Natural killer cell (primary cell): ENCODE measurements at regions of chr1 and their contacts with region 1.

Region 1: GRCh38 chr1:228131766-228132165 is 8.3 kb upstream of the GUK1 start:
- DNase-seq: no peak
- ATAC-seq: no peak
- H3K4me3 ChIP-seq: no peak overlapping the region
- H3K4me3 Mint-ChIP-seq: no peak overlapping the region
- H3K27ac ChIP-seq: no peak overlapping the region
- H3K27ac Mint-ChIP-seq: no peak overlapping the region
- H3K4me1 ChIP-seq: peaks cover 7% of the 10 kb centered on the region
- H3K4me1 Mint-ChIP-seq: peaks cover 0 to 5% of the 10 kb centered on the region in 2 donors
- H3K27me3 ChIP-seq: no peaks in the 10 kb centered on the region
- H3K27me3 Mint-ChIP-seq: peaks cover 0 to 9% of the 10 kb centered on the region in 2 donors
- CTCF ChIP-seq: no peak

Region 2: DNA sequence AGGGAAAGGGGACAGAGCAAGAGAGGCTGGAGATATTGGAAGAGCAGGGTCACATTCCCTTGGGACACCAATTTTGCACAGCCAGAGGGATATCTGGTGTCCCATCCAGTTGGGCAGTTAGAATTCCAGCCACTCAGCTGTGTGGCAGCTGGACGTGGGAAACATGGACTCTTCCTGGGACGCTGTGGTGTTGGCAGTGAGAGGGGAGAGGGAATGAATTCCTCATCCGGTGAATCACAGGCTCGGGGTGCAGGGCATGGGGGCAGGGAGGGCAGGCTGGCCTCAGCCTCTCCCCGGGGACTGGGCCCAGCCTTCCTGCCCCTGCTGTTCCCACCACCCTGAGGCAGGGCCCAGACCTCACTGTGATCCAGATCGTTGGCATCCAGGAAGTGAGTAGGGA is 116.5 kb before region 1 on chr1:
- intact Hi-C with region 1: no loop called
- DNase-seq: no peak
- ATAC-seq: no peak
- H3K4me3 ChIP-seq: no peak overlapping the region
- H3K4me3 Mint-ChIP-seq: no peak overlapping the region
- H3K27ac ChIP-seq: no peak overlapping the region
- H3K27ac Mint-ChIP-seq: no peak overlapping the region
- H3K4me1 ChIP-seq: no peaks in the 10 kb centered on the region
- H3K4me1 Mint-ChIP-seq: no peaks in the 10 kb centered on the region
- H3K27me3 ChIP-seq: no peaks in the 10 kb centered on the region
- H3K27me3 Mint-ChIP-seq: peaks cover 12 to 14% of the 10 kb centered on the region in 2 donors
- CTCF ChIP-seq: no peak

Region 3: DNA sequence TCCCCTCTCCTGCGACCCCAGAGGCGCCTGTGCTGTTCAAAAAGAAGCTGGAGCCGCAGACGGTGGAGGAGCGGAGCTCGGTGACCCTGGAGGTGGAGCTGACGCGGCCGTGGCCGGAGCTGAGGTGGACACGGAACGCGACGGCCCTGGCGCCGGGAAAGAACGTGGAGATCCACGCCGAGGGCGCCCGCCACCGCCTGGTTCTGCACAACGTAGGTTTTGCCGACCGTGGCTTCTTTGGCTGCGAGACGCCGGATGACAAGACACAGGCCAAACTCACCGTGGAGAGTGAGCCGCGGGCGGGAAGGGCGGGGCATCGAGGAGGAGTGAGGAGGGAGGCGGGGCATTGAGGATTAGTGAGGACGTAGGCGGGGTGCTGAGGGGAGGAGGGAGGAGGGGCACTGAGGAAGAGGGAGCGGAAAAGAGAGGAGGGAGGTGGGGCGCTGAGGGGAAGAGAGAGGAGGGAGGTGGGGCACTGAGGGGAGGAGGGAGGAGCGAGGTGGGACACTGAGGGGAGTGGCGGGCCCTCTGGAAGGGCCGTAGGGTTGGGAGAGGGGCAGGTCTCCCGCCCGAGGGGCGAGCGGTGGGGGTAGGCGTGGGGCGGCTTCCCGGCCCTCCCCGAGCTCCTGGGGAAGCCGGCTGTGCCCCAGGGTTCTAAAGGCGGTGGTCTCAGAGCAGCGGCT is 144.1 kb after region 1 on chr1:
- intact Hi-C with region 1: loop called (anchors 5 kb)
- DNase-seq: peak; percentile 53 to 94
- ATAC-seq: peak; percentile 90 to 97 (median 94)
- H3K4me3 ChIP-seq: peak overlapping the region; percentile 64
- H3K4me3 Mint-ChIP-seq: peak overlapping the region; percentile 84
- H3K27ac ChIP-seq: no peak overlapping the region
- H3K27ac Mint-ChIP-seq: peak overlapping the region in 1 of 2 donors; percentile 73
- H3K4me1 ChIP-seq: peaks cover 16% of the 10 kb centered on the region
- H3K4me1 Mint-ChIP-seq: peaks cover 0 to 27% of the 10 kb centered on the region in 2 donors
- H3K27me3 ChIP-seq: no peaks in the 10 kb centered on the region
- H3K27me3 Mint-ChIP-seq: no peaks in the 10 kb centered on the region
- CTCF ChIP-seq: no peak

Region 4: DNA sequence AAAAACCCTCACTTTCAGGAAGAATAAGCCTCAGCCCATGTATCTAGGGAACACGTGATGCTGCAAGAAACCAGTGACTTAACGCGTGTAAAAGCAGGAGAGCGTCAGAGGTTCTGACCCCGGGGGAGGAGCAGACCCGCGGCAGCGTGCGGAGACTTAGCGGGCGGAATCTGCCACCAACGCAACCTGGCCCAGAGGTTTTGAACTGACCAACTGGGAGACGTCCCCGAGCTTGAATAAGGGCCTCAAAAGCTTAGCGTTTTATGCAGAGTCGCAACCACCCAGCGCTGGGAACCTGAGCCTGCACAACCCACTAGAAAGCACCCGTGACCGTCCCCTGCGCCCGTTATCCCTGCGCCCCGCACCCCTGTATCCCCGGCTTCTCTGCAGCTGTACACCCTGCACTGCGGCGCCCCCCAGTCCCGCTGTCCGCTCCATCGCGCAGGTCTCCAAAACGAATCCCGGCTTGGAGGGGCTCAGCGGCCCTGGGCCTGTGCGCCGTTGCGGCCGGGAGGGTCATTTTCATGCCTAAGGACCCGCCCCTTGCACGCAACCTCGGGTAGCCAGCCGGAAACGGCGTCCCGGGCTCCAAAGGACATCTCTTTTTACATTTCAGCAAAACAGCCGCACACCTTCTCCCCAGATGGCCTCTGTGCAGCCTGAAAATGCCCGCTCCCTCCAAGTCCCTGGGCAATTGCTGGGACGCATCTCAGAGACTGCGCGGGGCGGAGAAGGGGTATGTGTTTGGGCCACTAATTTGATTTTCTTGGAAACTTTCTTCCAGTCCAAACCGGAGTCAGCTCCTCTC is 314.3 kb after region 1 on chr1:
- intact Hi-C with region 1: no loop called
- DNase-seq: peak in 1 of 2 donors; percentile 56
- ATAC-seq: peak; percentile 52 to 91 (median 80)
- H3K4me3 ChIP-seq: peak overlapping the region; percentile 13
- H3K4me3 Mint-ChIP-seq: peak overlapping the region; percentile 55
- H3K27ac ChIP-seq: no peak overlapping the region
- H3K27ac Mint-ChIP-seq: no peak overlapping the region
- H3K4me1 ChIP-seq: peaks cover 10% of the 10 kb centered on the region
- H3K4me1 Mint-ChIP-seq: peaks cover 13 to 16% of the 10 kb centered on the region in 2 donors
- H3K27me3 ChIP-seq: peaks cover 28% of the 10 kb centered on the region
- H3K27me3 Mint-ChIP-seq: peaks cover 53 to 67% of the 10 kb centered on the region in 2 donors
- CTCF ChIP-seq: no peak

Region 5: GRCh38 chr1:228500901-228501871 is 369.4 kb after region 1 on chr1:
- intact Hi-C with region 1: loop called (anchors 5 kb)
- DNase-seq: peak; percentile 86 to 96
- ATAC-seq: peak; percentile 97 to 98 (median 98)
- H3K4me3 ChIP-seq: peak overlapping the region; percentile 36
- H3K4me3 Mint-ChIP-seq: peak overlapping the region; percentile 82
- H3K27ac ChIP-seq: peak overlapping the region; percentile 55
- H3K27ac Mint-ChIP-seq: peak overlapping the region; percentile 77 to 83
- H3K4me1 ChIP-seq: peaks cover 18% of the 10 kb centered on the region
- H3K4me1 Mint-ChIP-seq: peaks cover 16 to 35% of the 10 kb centered on the region in 2 donors
- H3K27me3 ChIP-seq: no peaks in the 10 kb centered on the region
- H3K27me3 Mint-ChIP-seq: no peaks in the 10 kb centered on the region
- CTCF ChIP-seq: peak; percentile 96